ENCODE measurements at regions of chr10 and their contacts with region 1.

Region 1: DNA sequence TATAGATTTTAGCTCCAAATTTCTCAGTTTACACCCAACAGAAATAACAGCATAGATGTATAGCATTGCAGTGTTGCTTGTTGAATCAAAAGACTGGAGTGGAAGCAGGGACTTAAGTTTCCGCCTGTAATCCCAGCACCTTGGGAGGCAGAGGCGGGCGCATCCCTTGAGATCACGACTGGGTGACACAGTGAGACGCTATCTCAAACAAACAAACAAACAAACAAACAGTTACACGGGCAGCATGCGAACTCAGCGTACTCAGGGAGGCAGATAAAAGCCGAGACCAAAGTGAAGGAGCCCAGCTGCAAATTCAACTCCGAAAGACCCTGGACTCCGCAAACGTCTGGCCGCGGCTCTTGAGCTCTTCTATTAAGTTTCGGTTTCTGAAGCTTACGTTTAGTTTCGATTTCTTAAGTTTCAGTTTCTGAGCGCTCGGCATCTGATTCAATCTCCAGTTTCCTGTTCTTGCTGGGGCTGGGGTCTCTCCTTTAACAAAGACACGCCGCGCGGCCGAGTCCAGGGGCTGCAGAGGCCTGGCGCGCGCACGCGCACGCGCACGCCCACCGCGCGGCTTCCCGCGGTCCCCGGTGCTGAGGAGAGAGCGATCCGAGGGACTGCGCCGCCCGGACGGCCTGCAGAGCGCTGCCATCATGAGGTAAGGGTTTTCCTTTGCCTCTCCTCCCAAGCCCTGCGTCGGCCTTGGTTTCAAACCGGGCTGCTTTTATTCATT is at the start of gene IFIT5:
- DNase-seq: no peak
- H3K4me3 ChIP-seq: peak within 1 kb of the TSS; percentile 80
- CTCF ChIP-seq: no peak

Region 2: DNA sequence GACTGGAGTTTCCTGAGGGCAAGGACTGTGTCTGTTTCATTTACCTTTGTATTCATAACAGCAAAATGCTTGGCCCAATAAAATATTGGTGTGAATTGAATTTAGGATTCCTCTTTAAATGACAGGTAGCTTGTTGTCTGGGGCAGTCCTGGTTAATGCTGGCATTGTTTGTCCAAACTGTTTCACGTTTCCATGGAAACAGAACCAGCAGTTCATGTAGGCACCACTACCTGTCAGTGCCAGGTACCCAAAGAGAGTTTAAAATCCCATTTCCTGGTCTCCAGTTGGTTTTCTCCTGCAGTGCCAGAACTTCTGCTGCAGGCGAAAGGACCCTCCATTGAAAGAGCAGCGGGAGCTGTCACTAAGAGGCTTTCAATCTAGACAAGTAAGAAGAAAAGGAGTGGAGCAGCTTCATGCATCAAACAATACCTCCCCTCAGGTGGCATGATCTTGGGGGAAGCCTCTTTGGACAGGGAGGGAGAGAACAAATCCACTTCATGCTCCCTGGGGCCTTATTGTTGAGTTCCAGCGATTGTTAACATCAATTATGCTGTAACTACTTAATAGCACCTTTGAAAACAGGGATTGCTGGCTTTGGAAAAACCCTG is 396.7 kb after region 1 on chr10:
- in situ Hi-C with region 1: no loop called
- DNase-seq: no peak
- H3K4me3 ChIP-seq: no peak overlapping the region
- CTCF ChIP-seq: no peak

Region 3: DNA sequence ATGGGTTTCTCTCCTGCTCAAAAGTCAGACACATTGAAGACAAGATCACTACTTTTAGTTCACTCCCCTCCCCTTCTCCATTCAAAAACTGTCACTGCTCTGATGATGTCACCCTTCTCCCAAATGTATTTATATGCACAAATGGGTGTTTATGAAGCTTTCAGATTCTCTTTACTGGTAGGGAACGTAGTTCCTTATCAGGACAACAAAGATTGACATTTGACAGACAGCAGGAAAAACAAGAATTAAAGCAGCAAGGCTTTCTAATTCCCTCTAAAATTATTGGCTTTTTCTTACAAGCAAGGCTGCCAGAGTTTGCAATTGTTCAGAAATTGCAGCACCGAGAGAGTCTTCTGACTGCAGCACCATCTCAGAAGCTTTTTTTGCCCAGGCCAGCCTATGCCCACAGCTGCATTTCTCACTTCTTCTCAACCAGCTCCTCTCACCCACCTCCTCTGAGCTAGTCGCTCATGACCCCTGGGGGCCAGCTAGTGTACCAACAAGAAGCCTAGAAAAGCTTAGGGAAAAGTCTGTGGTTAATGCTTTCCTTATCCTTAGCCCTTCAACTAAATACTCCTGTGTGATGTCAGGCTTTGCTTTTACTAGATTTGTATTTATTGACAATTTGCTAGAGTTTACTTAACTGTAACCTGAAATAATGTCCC is 1178.5 kb after region 1 on chr10:
- in situ Hi-C with region 1: loop called (anchors 25 kb)
- DNase-seq: peak; percentile 64
- H3K4me3 ChIP-seq: no peak overlapping the region
- CTCF ChIP-seq: peak; percentile 83